CD14-positive monocyte (primary cell): ENCODE measurements at regions of chr5 and their contacts with region 1.

Region 1: GRCh38 chr5:163437309-163438182 is at the start of gene CCNG1:
- DNase-seq: peak; percentile 90 to 95 (median 94)
- H3K4me3 ChIP-seq: peak within 1 kb of the TSS; percentile 49 to 94 (median 86)
- H3K4me3 Mint-ChIP-seq: peak within 1 kb of the TSS; percentile 85 to 91
- H3K27ac ChIP-seq: peak within 1 kb of the TSS; percentile 68 to 92
- H3K27ac Mint-ChIP-seq: peak within 1 kb of the TSS; percentile 80 to 92 (median 89)
- H3K4me1 ChIP-seq: peaks cover 17 to 28% of the 10 kb centered on the region in 2 donors
- H3K4me1 Mint-ChIP-seq: peaks cover 27% of the 10 kb centered on the region
- H3K27me3 ChIP-seq: no peaks in the 10 kb centered on the region
- H3K27me3 Mint-ChIP-seq: no peaks in the 10 kb centered on the region
- CTCF ChIP-seq: no peak
- polyA plus RNA-seq, gene CCNG1: 13.1 to 48.9 (median 46.0) TPM

Region 2: GRCh38 chr5:163505368-163506094 is 68.0 kb after region 1 on chr5 and contains the start of gene MAT2B:
- intact Hi-C with region 1: loop called in 1 of 2 experiments (anchors 2 kb)
- DNase-seq: peak; percentile 90 to 91 (median 91)
- H3K4me3 ChIP-seq: peak within 1 kb of the TSS; percentile 62 to 99 (median 97)
- H3K4me3 Mint-ChIP-seq: peak within 1 kb of the TSS; percentile 89 to 97
- H3K27ac ChIP-seq: peak within 1 kb of the TSS; percentile 89 to 96
- H3K27ac Mint-ChIP-seq: peak within 1 kb of the TSS; percentile 94 to 99 (median 97)
- H3K4me1 ChIP-seq: peaks cover 39 to 62% of the 10 kb centered on the region in 2 donors
- H3K4me1 Mint-ChIP-seq: peaks cover 58% of the 10 kb centered on the region
- H3K27me3 ChIP-seq: no peaks in the 10 kb centered on the region
- H3K27me3 Mint-ChIP-seq: peaks cover 0 to 2% (median 0%) of the 10 kb centered on the region in 3 donors
- CTCF ChIP-seq: peak; percentile 53
- polyA plus RNA-seq, gene MAT2B: 34.8 to 165 (median 142) TPM